Gastrocnemius medialis (tissue), 4 donors: ENCODE measurements at regions of chr5 and their contacts with region 1.

Region 1: GRCh38 chr5:146130440-146131045 is 25.2 kb upstream of the PLAC8L1 start:
- DNase-seq: no peak
- ATAC-seq: no peak
- H3K4me3 ChIP-seq: no peak overlapping the region
- H3K27ac ChIP-seq: no peak overlapping the region
- H3K4me1 ChIP-seq: no peaks in the 10 kb centered on the region
- H3K27me3 ChIP-seq: no peaks in the 10 kb centered on the region
- CTCF ChIP-seq: peak in 4 of 5 experiments; percentile 30 to 41 (median 33)
- POLR2A ChIP-seq: no peak

Region 2: GRCh38 chr5:146466521-146467349 is 336.2 kb after region 1 on chr5:
- in situ Hi-C with region 1: loop called in 2 of 4 experiments (anchors 25 kb)
- intact Hi-C with region 1: no loop called
- DNase-seq: no peak
- ATAC-seq: no peak
- H3K4me3 ChIP-seq: no peak overlapping the region
- H3K27ac ChIP-seq: no peak overlapping the region
- H3K4me1 ChIP-seq: no peaks in the 10 kb centered on the region
- H3K27me3 ChIP-seq: no peaks in the 10 kb centered on the region
- CTCF ChIP-seq: peak in 1 of 5 experiments; percentile 7
- POLR2A ChIP-seq: no peak